AG04450 (cell line): ENCODE measurements at regions of chr7 and their contacts with region 1.

Region 1: DNA sequence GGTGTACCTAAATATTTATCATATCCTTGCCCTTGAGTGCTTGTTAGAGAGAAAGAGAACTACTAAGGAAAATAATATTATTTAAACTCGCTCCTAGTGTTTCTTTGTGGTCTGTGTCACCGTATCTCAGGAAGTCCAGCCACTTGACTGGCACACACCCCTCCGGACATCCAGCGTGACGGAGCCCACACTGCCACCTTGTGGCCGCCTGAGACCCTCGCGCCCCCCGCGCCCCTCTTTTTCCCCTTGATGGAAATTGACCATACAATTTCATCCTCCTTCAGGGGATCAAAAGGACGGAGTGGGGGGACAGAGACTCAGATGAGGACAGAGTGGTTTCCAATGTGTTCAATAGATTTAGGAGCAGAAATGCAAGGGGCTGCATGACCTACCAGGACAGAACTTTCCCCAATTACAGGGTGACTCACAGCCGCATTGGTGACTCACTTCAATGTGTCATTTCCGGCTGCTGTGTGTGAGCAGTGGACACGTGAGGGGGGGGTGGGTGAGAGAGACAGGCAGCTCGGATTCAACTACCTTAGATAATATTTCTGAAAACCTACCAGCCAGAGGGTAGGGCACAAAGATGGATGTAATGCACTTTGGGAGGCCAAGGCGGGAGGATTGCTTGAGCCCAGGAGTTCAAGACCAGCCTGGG is 11.4 kb downstream of the SERPINE1 start:
- DNase-seq: peak; percentile 89
- H3K4me3 ChIP-seq: no peak overlapping the region
- H3K27ac ChIP-seq: peak overlapping the region; percentile 81
- H3K27me3 ChIP-seq: no peaks in the 10 kb centered on the region
- CTCF ChIP-seq: peak; percentile 69

Region 2: GRCh38 chr7:101094416-101095375 is 43.6 kb before region 1 on chr7:
- CTCF ChIA-PET with region 1: interaction called, 10 read pairs
- POLR2A ChIA-PET with region 1: interaction called, 6 read pairs
- DNase-seq: peak; percentile 29
- H3K4me3 ChIP-seq: no peak overlapping the region
- H3K27ac ChIP-seq: peak overlapping the region; percentile 90
- H3K27me3 ChIP-seq: no peaks in the 10 kb centered on the region
- CTCF ChIP-seq: peak; percentile 76

Region 3: GRCh38 chr7:101126651-101127280 is 11.6 kb before region 1 on chr7 and contains the start of gene SERPINE1:
- CTCF ChIA-PET with region 1: interaction called, 12 read pairs
- POLR2A ChIA-PET with region 1: interaction called, 12 read pairs
- DNase-seq: peak; percentile 99
- H3K4me3 ChIP-seq: peak within 1 kb of the TSS; percentile 91
- H3K27ac ChIP-seq: peak within 1 kb of the TSS; percentile 89
- H3K27me3 ChIP-seq: no peaks in the 10 kb centered on the region
- CTCF ChIP-seq: peak; percentile 49
- polyA plus RNA-seq, gene SERPINE1: 356 and 417 TPM in 2 replicates

Region 4: DNA sequence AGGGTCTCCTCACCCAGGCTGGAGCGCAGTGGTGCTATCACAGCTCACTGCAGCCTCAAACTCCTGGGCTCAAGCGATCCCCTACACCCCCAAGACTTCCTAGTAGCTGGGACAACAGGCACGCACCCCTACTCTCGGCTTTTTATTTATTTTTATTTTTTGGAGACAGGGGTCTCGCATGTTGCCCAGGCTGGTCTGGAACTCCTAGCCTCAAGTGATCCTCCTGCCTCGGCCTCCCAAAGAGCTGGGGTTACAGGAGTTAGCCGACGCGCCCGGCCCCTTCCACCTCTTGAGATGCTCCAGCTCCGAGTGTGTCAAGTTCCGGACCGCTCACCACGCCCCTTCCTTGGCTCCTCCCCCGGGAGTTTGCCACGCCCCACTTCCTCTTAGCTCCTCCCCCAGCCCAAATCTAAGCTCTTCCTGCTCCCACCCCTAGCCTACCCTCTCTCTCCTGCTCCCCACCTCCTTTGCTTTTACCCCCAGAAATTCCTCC is 35.5 kb after region 1 on chr7:
- CTCF ChIA-PET with region 1: interaction called, 21 read pairs
- POLR2A ChIA-PET with region 1: interaction called, 3 read pairs
- DNase-seq: no peak
- H3K4me3 ChIP-seq: peak overlapping the region; percentile 46
- H3K27ac ChIP-seq: peak overlapping the region; percentile 31
- H3K27me3 ChIP-seq: peaks cover 77% of the 10 kb centered on the region
- CTCF ChIP-seq: no peak

Region 5: DNA sequence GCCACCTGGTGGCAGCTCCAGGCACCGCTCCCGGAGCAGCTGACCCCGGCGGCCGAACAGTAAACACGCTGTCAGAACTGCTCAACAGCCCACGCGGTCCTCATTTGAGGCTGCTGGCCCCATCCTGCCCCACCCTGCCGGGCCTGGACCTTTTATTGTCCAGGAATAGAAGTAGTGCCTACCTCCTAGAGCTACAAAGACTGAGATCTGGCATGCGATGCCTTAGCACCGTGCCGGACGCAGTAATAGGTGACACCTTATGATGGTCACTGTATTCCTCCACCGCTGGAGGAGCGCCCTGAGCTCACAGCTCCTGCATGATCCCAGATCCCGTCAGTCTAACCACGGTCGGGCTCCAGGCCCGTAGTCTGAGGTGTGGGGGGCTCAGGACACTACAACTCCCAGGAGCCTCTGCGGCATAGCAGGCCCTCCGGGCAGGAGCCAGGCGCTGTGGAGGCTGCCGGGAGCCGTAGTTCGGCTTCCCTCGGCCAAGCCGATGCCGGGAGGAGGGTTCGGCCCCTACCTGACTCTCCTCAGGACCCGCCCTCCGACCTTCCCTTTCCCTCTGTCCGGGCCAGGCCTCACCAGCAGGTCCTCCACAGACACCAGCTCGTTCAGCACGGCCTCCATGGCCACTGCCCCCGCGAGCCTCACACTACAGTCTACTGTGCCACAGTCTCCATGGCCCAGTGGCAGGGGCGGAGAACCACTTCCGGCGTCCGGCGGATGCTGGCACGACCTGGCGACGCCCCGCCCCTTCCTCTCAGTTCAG is 106.2 kb after region 1 on chr7 and contains the start of gene FIS1:
- CTCF ChIA-PET with region 1: interaction called, 101 read pairs
- POLR2A ChIA-PET with region 1: no interaction called
- DNase-seq: peak; percentile 52
- H3K4me3 ChIP-seq: peak within 1 kb of the TSS; percentile 98
- H3K27ac ChIP-seq: peak within 1 kb of the TSS; percentile 92
- H3K27me3 ChIP-seq: no peaks in the 10 kb centered on the region
- CTCF ChIP-seq: peak; percentile 87
- polyA plus RNA-seq, gene FIS1: 170 and 198 TPM in 2 replicates